ENCODE measurements at regions of chr16 and their contacts with region 1.

Region 1: GRCh38 chr16:19245326-19245925 is 40.1 kb upstream of the CLEC19A start:
- DNase-seq: peak; percentile 16
- ATAC-seq: no peak
- H3K4me3 Mint-ChIP-seq: no peak overlapping the region
- H3K27ac Mint-ChIP-seq: no peak overlapping the region
- H3K4me1 Mint-ChIP-seq: peaks cover 3% of the 10 kb centered on the region; the same call in 1 of the 2 replicates
- H3K27me3 Mint-ChIP-seq: no peaks in the 10 kb centered on the region
- CTCF ChIP-seq: no peak

Region 2: DNA sequence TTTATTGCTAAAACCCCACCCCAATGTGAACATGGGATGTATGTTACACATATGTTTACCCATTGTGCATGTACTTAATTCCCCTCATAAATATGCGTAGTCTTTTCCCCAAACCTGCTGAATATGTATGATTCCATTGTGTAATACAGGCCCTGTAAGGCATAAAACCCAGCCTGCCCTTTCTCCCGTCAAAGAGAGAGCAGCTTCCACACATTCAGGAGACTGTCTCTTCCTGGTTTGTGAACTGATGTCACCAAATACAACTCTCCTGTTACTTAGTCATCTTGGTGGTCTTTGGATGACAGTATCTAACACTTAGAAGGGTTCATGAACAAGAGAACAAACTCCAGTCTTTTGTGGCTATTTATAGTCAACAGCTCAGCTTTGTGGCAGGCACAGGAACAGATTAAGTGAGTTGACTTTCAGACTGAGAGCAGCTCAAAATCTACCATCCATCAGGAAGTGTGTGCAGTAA is 286.4 kb before region 1 on chr16:
- CTCF ChIA-PET with region 1: no interaction called
- POLR2A ChIA-PET with region 1: no interaction called
- DNase-seq: no peak
- ATAC-seq: no peak
- H3K4me3 Mint-ChIP-seq: no peak overlapping the region
- H3K27ac Mint-ChIP-seq: peak overlapping the region; percentile 35
- H3K4me1 Mint-ChIP-seq: 0 out of 2 replicates have a peak, but pooled peaks cover 7% of the 10 kb centered on the region
- H3K27me3 Mint-ChIP-seq: no peaks in the 10 kb centered on the region; the same call in 1 of the 2 replicates
- CTCF ChIP-seq: no peak

Region 3: DNA sequence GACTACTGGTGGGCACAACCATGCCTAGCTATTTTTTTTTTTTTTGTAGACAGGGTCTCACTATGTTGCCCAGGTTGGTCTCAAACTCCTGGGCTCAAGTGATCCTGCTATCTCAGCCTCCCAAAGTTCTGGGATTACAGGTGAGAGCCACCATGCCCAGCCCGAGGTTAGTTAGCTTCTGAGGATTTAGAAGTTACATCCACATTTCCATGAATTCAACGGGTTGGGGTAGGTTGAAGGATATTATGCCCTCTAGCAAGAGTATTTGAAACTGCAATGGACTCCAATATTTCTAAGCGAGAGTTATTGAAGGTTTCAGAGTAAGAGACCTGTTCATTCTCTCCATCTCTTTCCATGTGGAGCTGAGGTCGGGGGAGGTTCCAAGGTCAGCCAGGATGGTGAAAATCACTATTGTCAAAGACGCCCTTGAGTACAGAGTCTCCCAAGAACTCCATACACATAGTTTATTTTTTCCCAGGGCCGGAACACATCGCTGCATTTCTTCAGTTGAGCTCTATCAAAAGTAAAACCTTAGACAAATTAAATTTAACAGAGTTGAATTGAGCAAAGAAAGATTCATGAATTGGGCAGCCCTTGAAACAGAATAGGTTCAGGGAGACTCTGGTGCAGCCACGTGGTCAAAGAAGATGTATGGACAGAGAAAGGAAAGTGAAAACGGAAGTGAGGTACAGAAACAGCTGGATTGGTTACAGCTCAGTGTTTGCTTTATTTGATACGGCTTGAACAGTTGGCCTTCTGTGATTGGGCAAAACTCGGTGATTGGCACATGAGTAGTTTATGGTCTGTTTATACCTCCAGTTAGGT is 150.7 kb before region 1 on chr16:
- CTCF ChIA-PET with region 1: no interaction called
- POLR2A ChIA-PET with region 1: interaction called, 14 read pairs
- DNase-seq: no peak
- ATAC-seq: no peak
- H3K4me3 Mint-ChIP-seq: no peak overlapping the region
- H3K27ac Mint-ChIP-seq: no peak overlapping the region
- H3K4me1 Mint-ChIP-seq: peaks cover 11% of the 10 kb centered on the region; the same call in 1 of the 2 replicates
- H3K27me3 Mint-ChIP-seq: peaks cover 2% of the 10 kb centered on the region
- CTCF ChIP-seq: no peak

Region 4: GRCh38 chr16:19168371-19169081 is 76.9 kb before region 1 on chr16:
- CTCF ChIA-PET with region 1: no interaction called
- POLR2A ChIA-PET with region 1: no interaction called
- DNase-seq: no peak
- ATAC-seq: peak; percentile 14
- H3K4me3 Mint-ChIP-seq: peak overlapping the region; percentile 72
- H3K27ac Mint-ChIP-seq: no peak overlapping the region
- H3K4me1 Mint-ChIP-seq: peaks cover 12% of the 10 kb centered on the region
- H3K27me3 Mint-ChIP-seq: peaks cover 19% of the 10 kb centered on the region
- CTCF ChIP-seq: no peak

Region 5: DNA sequence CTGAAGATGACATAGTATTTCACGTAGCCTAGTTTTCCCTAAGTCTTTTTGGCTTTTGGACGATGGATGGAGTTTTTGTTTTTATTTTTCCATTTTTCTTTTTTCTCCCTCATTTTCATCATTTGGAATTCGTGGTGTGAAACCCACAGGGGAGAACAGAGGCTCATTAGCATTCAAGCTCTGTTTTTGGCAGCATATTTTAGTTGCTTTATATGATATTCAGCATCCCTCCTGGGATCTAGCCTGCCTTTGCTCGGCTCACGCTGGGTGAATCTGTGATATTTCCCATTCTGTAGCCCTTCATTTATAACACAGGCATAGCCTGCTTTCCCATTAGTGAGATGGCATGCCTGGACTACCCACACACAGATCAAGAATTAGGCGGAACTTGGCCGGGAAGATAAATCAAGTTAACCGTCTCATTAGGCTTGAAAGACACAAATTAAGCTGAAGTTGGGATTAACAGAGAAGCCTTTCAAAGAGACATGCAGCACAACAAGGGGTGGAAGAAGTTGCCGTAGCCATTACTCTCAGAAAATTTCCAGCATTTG is 20.0 kb after region 1 on chr16:
- CTCF ChIA-PET with region 1: no interaction called
- POLR2A ChIA-PET with region 1: no interaction called
- DNase-seq: no peak
- ATAC-seq: no peak
- H3K4me3 Mint-ChIP-seq: no peak overlapping the region
- H3K27ac Mint-ChIP-seq: no peak overlapping the region
- H3K4me1 Mint-ChIP-seq: no peaks in the 10 kb centered on the region
- H3K27me3 Mint-ChIP-seq: no peaks in the 10 kb centered on the region; the same call in 1 of the 2 replicates
- CTCF ChIP-seq: no peak